Dorsolateral prefrontal cortex (tissue), 120 donors: ENCODE measurements at regions of chr14 and their contacts with region 1.

Region 1: GRCh38 chr14:55707365-55707804 is 127.4 kb downstream of the KTN1 start:
- DNase-seq: no peak
- H3K4me3 ChIP-seq: peak overlapping the region in 3 of 59 donors; percentile 19 to 38 (median 36)
- H3K27ac ChIP-seq: no peak overlapping the region
- H3K27me3 ChIP-seq: no peaks in the 10 kb centered on the region
- CTCF ChIP-seq: peak; percentile 53 to 88 (median 76)

Region 2: GRCh38 chr14:55645145-55645544 is 62.2 kb before region 1 on chr14:
- intact Hi-C with region 1: no loop called
- DNase-seq: no peak
- H3K4me3 ChIP-seq: no peak overlapping the region
- H3K27ac ChIP-seq: no peak overlapping the region
- H3K27me3 ChIP-seq: no peaks in the 10 kb centered on the region
- CTCF ChIP-seq: no peak

Region 3: GRCh38 chr14:56216626-56217379 is 509.4 kb after region 1 on chr14:
- intact Hi-C with region 1: loop called in 1 of 2 experiments (anchors 5 kb)
- DNase-seq: peak in 7 of 10 donors; percentile 42 to 84 (median 57)
- H3K4me3 ChIP-seq: peak overlapping the region in 1 of 59 donors; percentile 9
- H3K27ac ChIP-seq: peak overlapping the region in 27 of 59 donors; percentile 3 to 67 (median 28)
- H3K27me3 ChIP-seq: no peaks in the 10 kb centered on the region
- CTCF ChIP-seq: no peak

Region 4: DNA sequence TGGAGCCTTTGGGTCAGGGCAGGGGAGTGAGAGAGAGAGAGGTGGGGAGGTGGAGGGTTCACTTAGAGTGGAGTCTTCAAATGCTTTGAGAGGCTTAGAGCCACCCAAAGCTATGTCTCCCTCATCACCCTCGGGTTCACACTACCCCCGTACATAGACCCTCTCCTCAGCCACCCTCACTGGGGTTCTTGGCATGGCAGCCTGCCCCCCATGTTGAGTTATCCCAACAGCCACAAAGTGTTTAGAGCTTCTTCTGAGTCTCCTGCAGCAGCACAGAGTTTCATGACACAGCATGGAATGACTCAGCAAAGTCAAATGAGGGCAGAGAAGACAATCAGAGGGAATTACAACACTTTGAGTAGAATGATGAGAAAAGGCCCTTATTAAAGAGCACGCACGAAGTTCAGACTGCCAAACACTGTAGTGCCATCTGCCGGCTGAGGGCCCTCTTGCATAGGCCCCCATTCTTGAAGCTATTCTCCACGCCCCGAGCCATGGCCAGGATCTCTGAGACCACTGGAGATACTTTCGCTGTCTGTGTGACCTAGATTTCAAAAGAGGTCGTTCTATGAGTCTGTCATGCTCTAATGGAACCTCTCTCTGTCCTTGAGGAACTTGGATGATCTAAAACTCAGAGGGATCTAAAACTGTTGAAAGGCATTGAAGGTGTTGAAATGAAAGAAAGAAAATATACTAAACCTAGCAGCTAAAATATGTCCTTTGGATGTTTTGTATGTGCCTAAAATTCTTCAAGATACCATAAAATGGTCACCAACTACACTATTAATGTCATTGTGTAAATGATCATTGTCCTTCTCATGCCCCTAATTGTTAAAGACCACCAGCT is 632.7 kb after region 1 on chr14:
- intact Hi-C with region 1: loop called (anchors 2 to 5 kb)
- DNase-seq: peak; percentile 66 to 87 (median 74)
- H3K4me3 ChIP-seq: no peak overlapping the region
- H3K27ac ChIP-seq: peak overlapping the region in 1 of 59 donors; percentile 20
- H3K27me3 ChIP-seq: no peaks in the 10 kb centered on the region
- CTCF ChIP-seq: peak; percentile 72 to 98 (median 90)

Region 5: GRCh38 chr14:56422703-56423213 is 715.4 kb after region 1 on chr14:
- intact Hi-C with region 1: loop called in 1 of 2 experiments (anchors 5 kb)
- DNase-seq: peak in 8 of 10 donors; percentile 11 to 79 (median 47)
- H3K4me3 ChIP-seq: no peak overlapping the region
- H3K27ac ChIP-seq: no peak overlapping the region
- H3K27me3 ChIP-seq: no peaks in the 10 kb centered on the region
- CTCF ChIP-seq: peak; percentile 43 to 80 (median 63)

Region 6: DNA sequence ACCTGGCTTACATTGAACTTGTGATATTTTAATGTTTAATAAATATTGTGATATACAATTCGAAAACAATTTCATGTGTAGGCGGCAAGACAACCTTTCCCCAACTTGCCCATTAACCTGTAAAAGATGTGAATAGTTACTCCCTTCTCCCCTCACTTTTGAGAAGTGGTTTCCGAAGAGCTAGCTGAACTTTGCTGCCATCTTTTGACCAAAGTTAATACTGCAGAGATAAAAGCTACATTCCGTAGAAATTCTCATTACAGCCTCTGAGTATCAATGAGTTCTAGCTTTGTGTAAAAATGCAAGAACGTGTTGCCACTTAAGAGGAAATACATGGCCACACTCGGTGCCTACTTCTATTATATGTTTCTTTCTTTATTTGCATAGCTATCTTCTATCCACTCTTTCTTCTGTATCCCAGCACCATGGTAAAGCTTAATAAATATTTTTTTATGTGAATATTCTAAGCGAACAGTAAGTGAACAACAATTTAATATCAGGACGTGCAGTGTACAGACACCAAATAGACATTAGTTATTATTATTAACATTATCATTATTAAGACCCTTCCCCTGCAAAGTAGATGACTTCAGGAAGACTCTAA is 767.1 kb after region 1 on chr14:
- intact Hi-C with region 1: loop called (anchors 5 to 10 kb)
- DNase-seq: no peak
- H3K4me3 ChIP-seq: no peak overlapping the region
- H3K27ac ChIP-seq: no peak overlapping the region
- H3K27me3 ChIP-seq: no peaks in the 10 kb centered on the region
- CTCF ChIP-seq: peak; percentile 52 to 92 (median 78)